ENCODE measurements at regions of chr1 and their contacts with region 1.

Region 1: DNA sequence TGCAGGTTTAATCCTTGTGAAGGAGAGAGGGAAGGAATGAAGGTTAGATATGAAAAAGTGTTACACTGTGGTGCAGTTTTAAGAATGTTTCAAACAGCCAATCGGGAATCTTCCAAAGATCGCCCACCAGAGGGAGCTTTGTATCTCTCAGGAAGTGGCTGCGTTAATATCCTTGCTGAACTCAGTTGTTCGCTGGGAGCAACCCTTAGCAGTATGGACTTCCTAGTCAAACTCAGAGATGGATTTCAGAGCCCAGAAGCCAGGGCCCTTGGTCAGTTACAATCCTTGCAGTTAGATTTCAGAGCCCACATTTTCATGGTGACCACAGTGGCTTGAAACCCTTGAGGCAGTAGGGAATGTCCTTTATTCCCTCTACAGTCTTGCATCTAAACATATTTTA is 136.2 kb downstream of the NTNG1 start:
- DNase-seq: peak; percentile 60
- H3K4me3 ChIP-seq: no peak overlapping the region
- H3K27ac ChIP-seq: no peak overlapping the region
- H3K4me1 ChIP-seq: no peaks in the 10 kb centered on the region
- H3K27me3 ChIP-seq: no peaks in the 10 kb centered on the region
- CTCF ChIP-seq: peak; percentile 8 to 35 (median 24)
- EP300 ChIP-seq: no peak
- POLR2A ChIP-seq: no peak

Region 2: DNA sequence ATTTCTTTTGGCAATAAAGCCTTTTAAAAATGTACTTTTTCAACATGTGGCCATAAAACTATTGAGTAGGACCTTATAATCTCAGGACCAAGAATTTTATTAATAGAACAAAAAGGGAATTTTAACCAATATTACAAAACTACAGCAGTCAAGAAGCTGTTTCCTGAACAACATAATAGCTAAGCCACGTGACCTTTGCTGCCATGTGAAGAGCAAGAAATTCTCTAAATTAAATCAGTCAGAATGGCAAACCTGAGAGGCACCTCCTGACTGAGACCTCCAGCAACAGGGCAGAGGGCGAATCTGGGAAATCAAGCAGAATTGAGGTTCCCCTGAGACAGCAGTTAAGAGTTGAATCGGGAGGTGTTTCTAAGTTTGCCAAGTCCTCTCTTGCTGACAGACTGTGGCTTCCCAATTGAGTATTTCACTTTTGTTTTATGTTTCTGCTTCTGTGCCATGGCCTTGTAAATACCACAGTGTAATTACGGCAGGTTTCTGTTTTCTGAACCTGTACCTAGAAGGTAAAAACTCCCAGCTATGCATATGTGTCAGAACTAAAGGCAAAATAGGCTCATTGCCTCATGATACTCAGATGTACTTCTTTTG is 222.2 kb after region 1 on chr1:
- intact Hi-C with region 1: loop called (anchors 10 kb)
- DNase-seq: no peak
- H3K4me3 ChIP-seq: no peak overlapping the region
- H3K27ac ChIP-seq: no peak overlapping the region
- H3K4me1 ChIP-seq: peaks cover 0 to 33% (median 11%) of the 10 kb centered on the region in 4 donors
- H3K27me3 ChIP-seq: no peaks in the 10 kb centered on the region
- CTCF ChIP-seq: no peak
- EP300 ChIP-seq: no peak
- POLR2A ChIP-seq: no peak

Measured in sigmoid colon (tissue), 7 donors.